Activated CD8-positive, alpha-beta memory T cell treated with anti-CD3 and anti-CD28 coated beads, Interleukin-2, amount 10 ng/mL, durations not matched to agents 7 days and 5 days (primary cell): ENCODE measurements at regions of chr6 and their contacts with region 1.

Region 1: DNA sequence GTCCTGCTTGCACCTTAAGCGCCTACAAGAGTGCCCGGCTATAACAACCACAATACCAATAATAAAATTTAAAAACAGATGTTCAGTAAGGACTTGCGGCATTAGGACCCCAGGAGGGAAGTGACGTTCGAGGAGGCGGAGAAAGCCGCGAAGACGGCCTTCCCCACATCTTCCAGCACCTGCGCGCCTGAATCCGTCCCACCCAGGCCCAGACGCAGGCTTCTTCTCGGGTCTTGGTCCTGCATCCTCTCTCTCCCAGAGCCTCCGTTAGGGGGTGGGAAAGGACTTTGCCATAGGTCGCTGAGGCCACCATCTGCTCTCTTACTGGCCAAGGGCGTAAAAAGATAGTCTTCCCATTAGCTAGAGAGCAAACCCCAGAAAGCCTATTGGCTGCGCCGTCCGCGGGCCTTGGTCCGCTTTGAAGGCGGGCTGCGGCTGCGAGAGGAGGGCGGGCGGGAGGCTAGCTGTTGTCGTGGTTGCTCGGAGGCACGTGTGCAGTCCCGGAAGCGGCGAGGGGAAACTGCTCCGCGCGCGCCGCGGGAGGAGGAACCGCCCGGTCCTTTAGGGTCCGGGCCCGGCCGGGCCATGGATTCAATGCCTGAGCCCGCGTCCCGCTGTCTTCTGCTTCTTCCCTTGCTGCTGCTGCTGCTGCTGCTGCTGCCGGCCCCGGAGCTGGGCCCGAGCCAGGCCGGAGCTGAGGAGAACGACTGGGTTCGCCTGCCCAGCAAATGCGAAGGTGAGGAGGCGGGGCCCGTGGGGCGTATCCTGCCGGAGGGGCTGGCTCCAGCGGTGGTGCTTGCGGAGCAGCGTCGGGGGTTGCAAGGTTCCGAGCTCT is at the start of gene CNPY3:
- DNase-seq: peak; percentile 99
- ATAC-seq: peak; percentile 86
- H3K4me3 Mint-ChIP-seq: peak within 1 kb of the TSS; percentile 93
- H3K27ac Mint-ChIP-seq: peak within 1 kb of the TSS; percentile 92
- H3K4me1 Mint-ChIP-seq: peaks cover 38% of the 10 kb centered on the region
- H3K27me3 Mint-ChIP-seq: no peaks in the 10 kb centered on the region
- total RNA-seq, gene CNPY3: 44.1 to 56.4 TPM

Region 2: GRCh38 chr6:42978839-42979522 is 49.8 kb after region 1 on chr6 and contains the start of gene PEX6:
- CTCF ChIA-PET with region 1: interaction called, 16 read pairs
- DNase-seq: peak; percentile 98
- ATAC-seq: peak; percentile 95
- H3K4me3 Mint-ChIP-seq: peak within 1 kb of the TSS; percentile 84
- H3K27ac Mint-ChIP-seq: peak within 1 kb of the TSS; percentile 97
- H3K4me1 Mint-ChIP-seq: peaks cover 43% of the 10 kb centered on the region
- H3K27me3 Mint-ChIP-seq: no peaks in the 10 kb centered on the region
- total RNA-seq, gene PEX6: 24.7 to 26.3 TPM

Region 3: GRCh38 chr6:43013843-43014433 is 84.7 kb after region 1 on chr6 and contains the starts of genes KLHDC3 and MEA1:
- CTCF ChIA-PET with region 1: interaction called, 14 read pairs
- DNase-seq: peak; percentile 100
- ATAC-seq: peak; percentile 93
- H3K4me3 Mint-ChIP-seq: peak within 1 kb of the TSS; percentile 96
- H3K27ac Mint-ChIP-seq: peak within 1 kb of the TSS; percentile 83
- H3K4me1 Mint-ChIP-seq: peaks cover 41% of the 10 kb centered on the region
- H3K27me3 Mint-ChIP-seq: no peaks in the 10 kb centered on the region
- total RNA-seq, gene KLHDC3: 62.6 to 75.1 TPM
- total RNA-seq, gene MEA1: 61.8 to 75.2 TPM